ENCODE measurements at regions of chr19 and their contacts with region 1.

Region 1: GRCh38 chr19:15629003-15629880 is 11.5 kb upstream of the CYP4F3 start:
- DNase-seq: peak; percentile 91
- ATAC-seq: peak; percentile 98
- H3K4me3 ChIP-seq: no peak overlapping the region
- H3K27ac ChIP-seq: no peak overlapping the region
- H3K4me1 ChIP-seq: no peaks in the 10 kb centered on the region
- H3K27me3 ChIP-seq: no peaks in the 10 kb centered on the region
- CTCF ChIP-seq: peak; percentile 95

Region 2: DNA sequence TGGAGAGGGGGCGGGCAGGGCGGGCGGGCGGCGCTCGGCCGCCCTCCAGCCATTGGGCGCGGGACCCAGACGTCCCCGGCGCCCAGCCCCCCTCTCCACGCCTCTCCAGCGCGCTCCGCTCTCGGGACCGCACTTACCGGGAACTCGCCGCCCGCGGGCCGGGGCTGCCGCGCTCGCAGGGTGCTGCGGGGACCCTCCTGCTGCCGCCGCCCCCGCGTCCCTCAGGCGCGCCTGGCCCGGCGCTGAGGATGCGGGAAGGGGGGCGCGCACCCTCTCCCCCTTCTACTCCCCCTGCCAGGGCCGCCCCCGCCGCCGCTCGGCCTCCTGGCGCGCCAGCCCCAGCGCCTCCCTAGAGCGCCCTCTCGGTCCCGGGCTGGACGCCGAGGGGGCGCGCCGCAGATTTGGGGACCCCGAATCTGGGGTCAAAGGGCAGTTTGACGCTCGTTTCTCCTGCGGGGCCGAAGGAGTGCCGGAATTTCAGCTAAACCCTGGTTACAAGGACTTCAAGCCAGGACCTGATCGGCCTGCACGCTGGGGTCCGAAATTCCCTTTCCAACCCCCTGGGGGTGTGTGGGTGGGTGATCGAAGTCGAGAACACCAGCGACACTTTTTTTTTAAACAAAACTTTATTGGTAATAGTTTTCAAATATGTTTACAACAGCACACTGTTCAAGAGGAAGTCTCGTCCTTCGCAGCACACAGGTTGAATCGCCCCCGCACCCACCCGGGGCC is 1538.0 kb before region 1 on chr19:
- intact Hi-C with region 1: no loop called
- DNase-seq: peak; percentile 81
- ATAC-seq: peak; percentile 89
- H3K4me3 ChIP-seq: peak overlapping the region; percentile 66
- H3K27ac ChIP-seq: peak overlapping the region; percentile 76
- H3K4me1 ChIP-seq: no peaks in the 10 kb centered on the region
- H3K27me3 ChIP-seq: no peaks in the 10 kb centered on the region
- CTCF ChIP-seq: peak; percentile 36

Region 3: GRCh38 chr19:15587663-15588062 is 41.6 kb before region 1 on chr19:
- intact Hi-C with region 1: no loop called
- DNase-seq: peak; percentile 84
- ATAC-seq: peak; percentile 77
- H3K4me3 ChIP-seq: no peak overlapping the region
- H3K27ac ChIP-seq: no peak overlapping the region
- H3K4me1 ChIP-seq: peaks cover 3% of the 10 kb centered on the region
- H3K27me3 ChIP-seq: peaks cover 16% of the 10 kb centered on the region
- CTCF ChIP-seq: no peak

Region 4: DNA sequence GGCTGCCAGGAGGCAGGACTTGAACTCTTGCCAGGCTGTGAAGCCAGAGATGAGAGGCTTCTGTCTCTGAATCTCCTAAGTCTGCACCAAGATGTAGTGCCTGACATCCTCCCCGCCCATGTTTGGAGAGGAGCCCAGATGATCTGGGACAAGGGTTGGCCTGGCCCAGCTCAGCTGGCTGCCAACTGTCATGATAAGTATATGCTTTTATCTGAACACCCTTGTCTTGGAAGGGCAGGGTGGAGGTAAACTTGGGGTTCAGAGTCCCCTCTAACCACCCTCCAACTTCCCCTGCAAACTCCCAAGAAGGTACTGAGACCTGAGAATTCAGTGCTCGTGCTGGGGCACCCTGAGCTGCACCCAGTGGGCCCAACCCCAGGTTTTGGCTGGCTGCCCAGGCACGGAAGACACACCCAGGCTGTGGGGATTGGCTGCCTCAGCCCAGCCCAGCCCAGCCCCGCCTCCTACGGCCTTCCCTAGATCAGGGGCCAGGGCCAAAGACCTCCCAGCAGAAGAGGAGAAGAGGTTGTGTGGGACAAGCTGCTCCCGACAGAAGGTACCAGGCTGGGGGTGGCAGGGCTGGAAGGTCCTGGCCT is 43.4 kb after region 1 on chr19 and contains the start of gene CYP4F12:
- intact Hi-C with region 1: no loop called
- DNase-seq: peak; percentile 82
- ATAC-seq: peak; percentile 82
- H3K4me3 ChIP-seq: no peak within 1 kb of the TSS
- H3K27ac ChIP-seq: no peak within 1 kb of the TSS
- H3K4me1 ChIP-seq: peaks cover 3% of the 10 kb centered on the region
- H3K27me3 ChIP-seq: no peaks in the 10 kb centered on the region
- CTCF ChIP-seq: no peak
- total RNA-seq, gene CYP4F12: 3.7 TPM

Region 5: GRCh38 chr19:15684831-15685230 is 55.6 kb after region 1 on chr19:
- intact Hi-C with region 1: no loop called
- DNase-seq: no peak
- ATAC-seq: no peak
- H3K4me3 ChIP-seq: no peak overlapping the region
- H3K27ac ChIP-seq: no peak overlapping the region
- H3K4me1 ChIP-seq: no peaks in the 10 kb centered on the region
- H3K27me3 ChIP-seq: no peaks in the 10 kb centered on the region
- CTCF ChIP-seq: no peak

Region 6: GRCh38 chr19:15869109-15869555 is 239.9 kb after region 1 on chr19:
- intact Hi-C with region 1: loop called (anchors 10 kb)
- DNase-seq: no peak
- ATAC-seq: peak; percentile 97
- H3K4me3 ChIP-seq: no peak overlapping the region
- H3K27ac ChIP-seq: no peak overlapping the region
- H3K4me1 ChIP-seq: no peaks in the 10 kb centered on the region
- H3K27me3 ChIP-seq: peaks cover 5% of the 10 kb centered on the region
- CTCF ChIP-seq: peak; percentile 62

Region 7: DNA sequence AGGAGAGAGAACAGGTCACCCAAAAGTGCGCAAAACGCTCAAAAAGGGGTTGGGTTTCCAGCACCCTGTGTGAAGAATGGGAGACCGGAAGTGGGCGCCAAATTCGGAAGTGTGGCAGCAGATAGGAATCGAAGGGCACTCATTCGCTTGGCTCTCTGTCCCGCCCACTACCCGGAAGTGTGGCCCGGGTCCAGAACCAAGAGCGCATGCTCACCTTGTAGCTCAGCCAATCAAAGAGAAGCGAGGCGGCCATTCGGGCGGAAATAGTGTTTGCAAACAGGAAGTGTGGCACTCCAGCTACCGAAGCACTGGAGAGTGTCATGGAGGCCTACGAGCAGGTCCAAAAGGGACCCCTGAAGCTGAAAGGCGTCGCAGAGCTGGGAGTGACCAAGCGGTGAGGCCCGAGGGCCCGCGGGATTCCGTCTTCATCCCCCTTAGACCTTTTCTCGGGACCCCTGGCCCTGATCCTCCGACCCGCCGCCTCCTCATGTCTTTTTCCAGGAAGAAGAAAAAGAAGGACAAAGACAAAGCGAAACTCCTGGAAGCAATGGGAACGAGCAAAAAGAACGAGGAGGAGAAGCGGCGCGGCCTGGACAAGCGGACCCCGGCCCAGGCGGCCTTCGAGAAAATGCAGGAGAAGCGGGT is 556.0 kb after region 1 on chr19 and contains the start of gene FAM32A:
- intact Hi-C with region 1: loop called (anchors 10 kb)
- DNase-seq: peak; percentile 99
- ATAC-seq: peak; percentile 98
- H3K4me3 ChIP-seq: peak within 1 kb of the TSS; percentile 69
- H3K27ac ChIP-seq: peak within 1 kb of the TSS; percentile 82
- H3K4me1 ChIP-seq: peaks cover 16% of the 10 kb centered on the region
- H3K27me3 ChIP-seq: no peaks in the 10 kb centered on the region
- CTCF ChIP-seq: peak; percentile 37
- total RNA-seq, gene FAM32A: 56.4 TPM